ENCODE measurements at regions of chr9 and their contacts with region 1.

Region 1: DNA sequence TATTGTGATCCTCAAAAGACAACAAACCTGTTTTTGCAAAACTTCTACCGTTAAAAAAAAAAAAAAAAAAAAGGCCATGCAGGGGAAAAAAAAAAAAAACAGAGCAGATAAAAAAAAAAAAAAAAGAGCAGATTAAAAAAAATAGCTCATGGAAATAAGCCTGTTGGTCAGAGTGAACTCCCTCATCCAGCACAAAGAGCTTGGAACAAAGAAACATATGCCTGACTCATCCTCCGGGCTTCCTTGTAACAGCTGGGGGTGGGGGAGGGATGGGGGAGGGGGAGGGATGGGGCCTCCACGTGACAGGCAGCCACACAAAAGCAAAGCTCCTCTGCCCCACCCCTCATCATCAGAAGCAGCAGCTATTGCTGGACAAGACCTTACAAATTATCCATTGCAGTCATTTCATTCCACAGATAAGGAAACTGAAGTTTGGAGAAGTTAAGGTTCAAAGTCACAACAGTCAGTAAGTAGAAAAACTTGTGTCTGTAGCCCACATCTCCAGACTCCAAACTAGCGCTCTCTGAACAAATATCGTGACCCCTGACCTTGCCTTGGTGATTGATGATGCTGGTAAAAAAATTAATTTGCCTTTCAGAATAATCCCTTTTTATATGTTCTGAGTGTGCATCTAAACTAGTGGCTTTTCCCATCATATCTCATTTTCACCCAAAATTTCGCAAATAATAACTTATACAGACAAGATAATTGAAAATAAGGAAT is 38.9 kb downstream of the SLC35D2 start:
- DNase-seq: no peak
- ATAC-seq: peak; percentile 29 to 53 (median 39)
- H3K4me3 ChIP-seq: no peak overlapping the region
- H3K27ac ChIP-seq: no peak overlapping the region
- H3K4me1 ChIP-seq: peaks cover 0 to 38% (median 12%) of the 10 kb centered on the region in 4 donors
- H3K27me3 ChIP-seq: no peaks in the 10 kb centered on the region
- CTCF ChIP-seq: no peak
- POLR2A ChIP-seq: no peak

Region 2: DNA sequence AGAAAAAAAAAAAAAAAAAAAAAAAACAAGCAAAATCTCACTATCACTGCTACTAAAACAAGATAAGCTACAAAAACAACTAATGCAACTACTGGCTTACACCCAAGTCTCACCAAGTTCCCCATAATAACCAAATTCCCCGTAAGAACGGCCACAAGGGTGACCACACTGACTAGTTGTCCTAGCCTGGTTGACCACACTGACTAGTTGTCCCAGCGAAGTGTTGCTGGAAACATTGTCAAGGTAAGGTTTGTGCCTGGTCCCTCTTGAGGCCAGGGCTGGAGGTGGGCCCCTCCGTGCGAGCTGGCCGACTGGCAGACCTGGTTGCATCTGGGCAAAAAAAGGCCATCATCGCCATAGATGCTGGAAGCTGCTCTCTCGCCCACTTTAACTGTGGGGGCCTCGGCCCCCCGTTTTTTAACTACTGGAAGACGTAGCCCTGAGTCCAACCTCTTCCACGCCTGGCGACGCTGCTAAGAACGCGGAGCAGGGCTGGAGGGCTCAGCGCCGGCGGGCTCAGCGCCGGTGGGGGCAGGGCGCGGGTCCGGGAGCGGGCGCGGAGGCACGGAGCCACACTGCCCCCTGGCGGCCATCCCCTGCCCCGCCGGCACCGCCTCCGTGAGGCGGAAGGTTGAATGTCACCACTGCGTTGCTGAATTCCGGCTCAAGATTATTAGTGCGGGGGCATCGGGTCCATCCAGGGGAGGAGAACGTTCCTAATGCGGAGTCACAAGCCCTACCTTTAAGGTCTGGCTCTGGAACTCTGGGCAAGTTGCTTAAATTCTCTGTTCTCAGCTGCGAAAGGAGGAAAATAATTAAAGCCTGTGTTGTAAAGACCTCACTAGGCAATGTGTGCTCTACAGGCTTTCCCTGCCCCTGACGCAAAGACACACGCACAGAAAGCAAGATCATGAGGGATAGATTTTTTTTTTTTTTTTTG is 126.6 kb before region 1 on chr9:
- intact Hi-C with region 1: no loop called
- DNase-seq: peak; percentile 66 to 77 (median 68)
- ATAC-seq: peak; percentile 92 to 96 (median 95)
- H3K4me3 ChIP-seq: peak overlapping the region; percentile 15 to 40 (median 39)
- H3K27ac ChIP-seq: peak overlapping the region in 1 of 3 donors; percentile 10
- H3K4me1 ChIP-seq: peaks cover 0 to 9% (median 0%) of the 10 kb centered on the region in 4 donors
- H3K27me3 ChIP-seq: no peaks in the 10 kb centered on the region
- CTCF ChIP-seq: peak; percentile 90 to 99 (median 99)
- POLR2A ChIP-seq: no peak

Region 3: GRCh38 chr9:96383165-96383942 is 38.7 kb after region 1 on chr9 and contains the start of gene SLC35D2:
- intact Hi-C with region 1: loop called in 1 of 2 experiments (anchors 5 kb)
- DNase-seq: peak; percentile 84 to 89 (median 88)
- ATAC-seq: peak; percentile 91 to 98 (median 94)
- H3K4me3 ChIP-seq: peak within 1 kb of the TSS; percentile 68 to 70 (median 70)
- H3K27ac ChIP-seq: peak within 1 kb of the TSS; percentile 68 to 85 (median 80)
- H3K4me1 ChIP-seq: peaks cover 0 to 23% (median 13%) of the 10 kb centered on the region in 4 donors
- H3K27me3 ChIP-seq: no peaks in the 10 kb centered on the region
- CTCF ChIP-seq: no peak
- POLR2A ChIP-seq: peak; percentile 74
- total RNA-seq, gene SLC35D2: 28.9 to 48.1 (median 34.3) TPM

Region 4: DNA sequence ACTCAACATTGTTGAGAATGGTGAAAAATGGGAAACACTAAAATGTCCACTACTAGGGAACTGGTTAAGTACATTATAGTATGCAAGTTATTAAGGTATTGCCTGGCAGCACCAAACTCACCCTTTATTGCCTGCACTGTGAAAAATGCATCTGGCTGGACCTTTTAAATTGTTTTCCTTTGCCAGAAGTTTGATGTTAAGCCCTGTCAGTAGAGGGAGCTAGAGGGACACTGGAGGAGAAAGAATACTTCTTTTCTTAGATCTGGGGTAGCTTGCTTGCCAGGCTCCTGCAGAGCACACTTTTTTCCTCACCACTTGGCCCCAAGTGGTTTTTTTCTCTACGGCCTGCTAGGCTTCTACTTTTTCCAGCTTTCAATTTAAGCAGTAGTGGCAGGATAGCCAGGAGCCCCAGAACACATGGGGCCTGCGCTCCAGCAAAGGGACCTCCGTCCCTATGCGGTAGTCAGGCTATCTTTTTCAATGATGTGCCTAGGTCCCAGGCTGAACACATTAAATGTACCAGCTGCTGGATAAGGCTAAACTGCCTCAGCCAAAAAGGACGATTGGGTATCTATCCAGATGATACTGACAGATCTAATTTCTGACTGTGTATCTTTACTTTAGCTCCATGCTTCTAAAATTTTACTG is 97.3 kb after region 1 on chr9:
- intact Hi-C with region 1: no loop called
- DNase-seq: no peak
- ATAC-seq: peak; percentile 82 to 90 (median 86)
- H3K4me3 ChIP-seq: no peak overlapping the region
- H3K27ac ChIP-seq: no peak overlapping the region
- H3K4me1 ChIP-seq: no peaks in the 10 kb centered on the region
- H3K27me3 ChIP-seq: no peaks in the 10 kb centered on the region
- CTCF ChIP-seq: peak; percentile 58 to 75 (median 70)
- POLR2A ChIP-seq: no peak